B cell (primary cell): ENCODE measurements at regions of chr16 and their contacts with region 1.

Region 1: GRCh38 chr16:17448640-17449638 is 21.8 kb downstream of the XYLT1 start:
- DNase-seq: peak; percentile 71
- ATAC-seq: peak; percentile 60
- H3K4me3 ChIP-seq: peak overlapping the region in 1 of 5 experiments; percentile 18
- H3K4me3 Mint-ChIP-seq: peak overlapping the region; percentile 64
- H3K27ac ChIP-seq: peak overlapping the region; percentile 73 to 84
- H3K27ac Mint-ChIP-seq: peak overlapping the region; percentile 76
- H3K4me1 ChIP-seq: peaks cover 34 to 47% of the 10 kb centered on the region in 2 donors
- H3K4me1 Mint-ChIP-seq: peaks cover 46% of the 10 kb centered on the region
- H3K27me3 ChIP-seq: no peaks in the 10 kb centered on the region
- H3K27me3 Mint-ChIP-seq: no peaks in the 10 kb centered on the region
- CTCF ChIP-seq: no peak

Region 2: GRCh38 chr16:17529982-17530765 is 81.2 kb after region 1 on chr16:
- CTCF ChIA-PET with region 1: no interaction called
- POLR2A ChIA-PET with region 1: no interaction called
- intact Hi-C with region 1: loop called (anchors 5 kb)
- DNase-seq: peak; percentile 56
- ATAC-seq: peak; percentile 81
- H3K4me3 ChIP-seq: peak overlapping the region in 4 of 5 experiments; percentile 34 to 54 (median 45)
- H3K4me3 Mint-ChIP-seq: peak overlapping the region; percentile 87
- H3K27ac ChIP-seq: peak overlapping the region; percentile 36 to 44
- H3K27ac Mint-ChIP-seq: peak overlapping the region; percentile 79
- H3K4me1 ChIP-seq: peaks cover 11 to 23% of the 10 kb centered on the region in 2 donors
- H3K4me1 Mint-ChIP-seq: peaks cover 36% of the 10 kb centered on the region
- H3K27me3 ChIP-seq: no peaks in the 10 kb centered on the region
- H3K27me3 Mint-ChIP-seq: peaks cover 6% of the 10 kb centered on the region
- CTCF ChIP-seq: no peak